Activated naive CD4-positive, alpha-beta T cell treated with anti-CD3 and anti-CD28 coated beads for 36 hours (primary cell): ENCODE measurements at regions of chr1 and their contacts with region 1.

Region 1: DNA sequence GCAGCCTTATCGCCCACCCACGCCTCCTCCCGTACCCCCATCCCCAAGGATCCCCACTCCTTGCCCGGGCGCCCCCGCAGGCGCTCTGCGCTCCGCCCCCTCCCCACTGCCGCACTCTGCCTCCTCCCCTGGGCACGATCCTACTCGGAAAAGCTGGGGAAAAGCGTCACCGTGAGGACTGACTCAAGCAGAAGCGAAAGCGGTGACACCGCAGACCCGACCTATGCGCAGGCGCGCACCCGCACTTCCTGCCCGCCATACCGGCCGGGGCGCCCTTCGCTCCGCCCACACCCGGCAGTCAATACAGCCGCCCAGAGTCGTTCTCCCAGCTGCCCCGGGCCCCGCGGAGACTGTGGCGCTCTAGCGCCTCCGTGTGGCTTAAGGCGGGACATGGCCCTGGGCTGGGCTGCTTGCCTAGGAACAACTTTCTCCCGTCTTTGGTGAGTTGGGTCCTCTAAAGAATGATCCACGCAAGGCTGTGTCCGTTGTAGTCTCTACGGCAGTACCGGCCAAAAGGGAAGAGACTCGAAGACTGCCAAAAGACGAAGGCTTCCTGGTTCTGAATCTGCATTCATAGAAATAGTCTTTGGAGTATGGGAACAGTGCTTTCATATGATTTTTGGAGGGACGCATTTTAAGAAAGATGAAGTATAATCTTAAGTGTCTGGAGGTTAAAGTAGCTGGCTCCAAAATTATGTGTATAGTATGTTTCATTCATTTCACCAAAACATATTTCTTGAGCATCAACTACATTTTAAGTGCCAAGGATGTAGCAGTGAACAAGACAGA is at the start of gene OMA1:
- DNase-seq: peak; percentile 98
- H3K4me3 Mint-ChIP-seq: peak within 1 kb of the TSS; percentile 91
- H3K27ac Mint-ChIP-seq: peak within 1 kb of the TSS; percentile 97
- H3K4me1 Mint-ChIP-seq: peaks cover 13% of the 10 kb centered on the region
- H3K27me3 Mint-ChIP-seq: no peaks in the 10 kb centered on the region
- total RNA-seq, gene OMA1: 15.4 to 16.6 TPM

Region 2: GRCh38 chr1:58047265-58047858 is 499.4 kb before region 1 on chr1:
- CTCF ChIA-PET with region 1: interaction called, 3 read pairs
- intact Hi-C with region 1: loop called (anchors 5 kb)
- DNase-seq: peak; percentile 44
- H3K4me3 Mint-ChIP-seq: no peak overlapping the region
- H3K27ac Mint-ChIP-seq: no peak overlapping the region
- H3K4me1 Mint-ChIP-seq: no peaks in the 10 kb centered on the region
- H3K27me3 Mint-ChIP-seq: no peaks in the 10 kb centered on the region

Region 3: GRCh38 chr1:58324558-58324957 is 222.2 kb before region 1 on chr1:
- CTCF ChIA-PET with region 1: no interaction called
- intact Hi-C with region 1: loop called (anchors 1 kb)
- DNase-seq: peak; percentile 48
- H3K4me3 Mint-ChIP-seq: peak overlapping the region; percentile 1
- H3K27ac Mint-ChIP-seq: peak overlapping the region; percentile 52
- H3K4me1 Mint-ChIP-seq: peaks cover 26% of the 10 kb centered on the region
- H3K27me3 Mint-ChIP-seq: no peaks in the 10 kb centered on the region

Region 4: DNA sequence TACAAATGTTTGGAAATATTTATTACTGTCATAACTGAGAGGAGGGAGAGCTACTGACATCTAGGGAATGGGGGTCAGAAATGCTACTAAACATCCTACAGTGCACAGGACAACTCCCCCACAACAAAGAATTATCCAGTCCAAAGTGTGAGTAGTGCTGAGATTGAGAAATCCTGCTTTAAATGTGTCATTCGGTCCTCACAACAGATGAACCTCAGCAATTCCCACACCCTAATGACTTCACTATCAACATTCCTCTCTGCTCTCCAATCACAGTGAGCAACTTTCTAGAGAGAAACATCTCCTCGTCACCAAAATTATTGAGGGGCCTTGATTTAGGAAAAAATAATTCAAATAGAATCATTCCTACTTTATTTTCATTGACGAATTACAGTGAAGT is 18.2 kb before region 1 on chr1:
- CTCF ChIA-PET with region 1: interaction called, 5 read pairs
- intact Hi-C with region 1: loop called (anchors 2 kb)
- DNase-seq: no peak
- H3K4me3 Mint-ChIP-seq: no peak overlapping the region
- H3K27ac Mint-ChIP-seq: no peak overlapping the region
- H3K4me1 Mint-ChIP-seq: peaks cover 20% of the 10 kb centered on the region
- H3K27me3 Mint-ChIP-seq: no peaks in the 10 kb centered on the region

Region 5: GRCh38 chr1:58659516-58659915 is 112.8 kb after region 1 on chr1:
- CTCF ChIA-PET with region 1: no interaction called
- intact Hi-C with region 1: no loop called
- DNase-seq: no peak
- H3K4me3 Mint-ChIP-seq: no peak overlapping the region
- H3K27ac Mint-ChIP-seq: no peak overlapping the region
- H3K4me1 Mint-ChIP-seq: no peaks in the 10 kb centered on the region
- H3K27me3 Mint-ChIP-seq: no peaks in the 10 kb centered on the region

Region 6: GRCh38 chr1:58699011-58699762 is 152.5 kb after region 1 on chr1:
- CTCF ChIA-PET with region 1: no interaction called
- intact Hi-C with region 1: loop called (anchors 1 kb)
- DNase-seq: peak; percentile 17
- H3K4me3 Mint-ChIP-seq: peak overlapping the region; percentile 96
- H3K27ac Mint-ChIP-seq: peak overlapping the region; percentile 91
- H3K4me1 Mint-ChIP-seq: peaks cover 19% of the 10 kb centered on the region
- H3K27me3 Mint-ChIP-seq: no peaks in the 10 kb centered on the region

Region 7: DNA sequence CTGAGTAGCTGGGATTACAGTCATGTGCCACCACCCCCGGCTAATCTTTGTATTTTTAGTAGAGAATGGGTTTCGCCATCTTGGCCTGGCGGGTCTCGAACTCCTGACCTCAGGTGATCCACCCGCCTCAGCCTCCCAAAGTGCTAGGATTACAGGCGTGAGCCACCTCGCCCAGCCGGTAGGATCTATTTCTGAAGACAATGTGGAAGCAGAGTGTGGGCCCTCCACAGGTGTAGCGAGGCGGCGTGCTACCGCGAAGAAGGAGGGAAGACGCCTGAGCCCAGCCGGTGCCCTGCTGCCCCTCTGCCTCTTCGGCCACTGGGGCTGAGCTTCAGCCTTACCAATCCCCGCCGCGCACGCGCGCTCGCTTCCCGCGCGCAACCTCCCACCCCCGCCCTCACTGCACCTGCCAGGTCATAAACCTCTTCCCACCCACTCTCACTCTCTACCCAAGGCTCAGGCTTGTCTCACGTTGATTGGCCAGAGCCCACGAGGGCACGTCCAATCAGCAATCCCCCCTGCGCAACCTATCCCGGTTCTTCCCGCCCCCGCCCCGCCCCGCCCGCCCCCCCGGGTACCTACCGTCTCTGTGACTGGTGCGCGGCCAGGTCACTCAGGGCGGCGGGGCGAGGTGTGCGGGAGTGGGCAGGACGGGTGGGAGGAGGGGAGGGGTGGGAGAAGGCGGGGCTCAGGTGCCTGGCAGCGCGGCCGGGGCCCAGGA is 1267.6 kb after region 1 on chr1:
- CTCF ChIA-PET with region 1: no interaction called
- intact Hi-C with region 1: loop called (anchors 1 kb)
- DNase-seq: peak; percentile 93
- H3K4me3 Mint-ChIP-seq: no peak overlapping the region
- H3K27ac Mint-ChIP-seq: peak overlapping the region; percentile 78
- H3K4me1 Mint-ChIP-seq: peaks cover 3% of the 10 kb centered on the region
- H3K27me3 Mint-ChIP-seq: peaks cover 8% of the 10 kb centered on the region